Ascending aorta (tissue), 2 donors: ENCODE measurements at regions of chr4 and their contacts with region 1.

Region 1: DNA sequence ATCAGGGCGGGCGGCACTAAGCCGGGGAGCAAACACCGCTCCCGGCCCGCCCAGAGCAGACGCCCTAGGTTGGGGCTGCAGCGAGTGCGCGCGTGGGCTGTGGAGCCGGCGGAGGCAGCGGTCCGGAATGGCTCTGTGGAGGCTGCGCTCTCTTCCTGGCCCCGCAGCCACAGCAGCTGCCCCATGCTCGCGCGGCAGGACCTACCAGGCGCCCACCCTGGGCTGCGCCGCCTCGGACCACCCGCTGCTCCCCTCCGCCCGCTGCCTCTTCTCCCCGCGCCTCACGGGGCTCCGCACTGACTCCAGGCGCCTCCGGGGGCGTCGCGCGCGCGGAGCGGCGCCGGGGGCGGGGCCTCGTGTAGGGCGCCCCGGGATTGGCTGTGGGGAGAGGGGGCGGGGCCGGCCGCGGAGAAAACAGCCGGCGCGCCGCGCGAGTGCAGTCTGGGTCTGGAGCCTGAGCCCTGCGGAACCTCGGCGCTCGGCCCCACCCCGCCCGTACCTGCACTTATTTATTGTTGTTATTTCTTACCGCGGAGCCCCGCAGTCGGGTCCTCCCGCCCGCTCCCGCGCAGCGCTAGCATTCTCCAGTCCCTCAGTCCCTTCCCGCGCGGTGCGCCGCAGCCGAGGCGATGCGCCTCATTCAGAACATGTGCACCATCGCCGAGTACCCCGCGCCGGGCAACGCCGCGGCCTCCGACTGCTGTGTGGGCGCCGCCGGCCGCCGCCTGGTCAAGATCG is at the start of gene RASL11B:
- DNase-seq: peak; percentile 20 to 90
- H3K4me3 ChIP-seq: peak within 1 kb of the TSS; percentile 72 to 80
- H3K27ac ChIP-seq: peak within 1 kb of the TSS; percentile 68 to 79
- H3K4me1 ChIP-seq: peaks cover 0 to 17% of the 10 kb centered on the region in 2 donors
- H3K27me3 ChIP-seq: no peaks in the 10 kb centered on the region
- CTCF ChIP-seq: peak in 2 of 3 experiments; percentile 24 to 43
- total RNA-seq, gene RASL11B: not detected

Region 2: DNA sequence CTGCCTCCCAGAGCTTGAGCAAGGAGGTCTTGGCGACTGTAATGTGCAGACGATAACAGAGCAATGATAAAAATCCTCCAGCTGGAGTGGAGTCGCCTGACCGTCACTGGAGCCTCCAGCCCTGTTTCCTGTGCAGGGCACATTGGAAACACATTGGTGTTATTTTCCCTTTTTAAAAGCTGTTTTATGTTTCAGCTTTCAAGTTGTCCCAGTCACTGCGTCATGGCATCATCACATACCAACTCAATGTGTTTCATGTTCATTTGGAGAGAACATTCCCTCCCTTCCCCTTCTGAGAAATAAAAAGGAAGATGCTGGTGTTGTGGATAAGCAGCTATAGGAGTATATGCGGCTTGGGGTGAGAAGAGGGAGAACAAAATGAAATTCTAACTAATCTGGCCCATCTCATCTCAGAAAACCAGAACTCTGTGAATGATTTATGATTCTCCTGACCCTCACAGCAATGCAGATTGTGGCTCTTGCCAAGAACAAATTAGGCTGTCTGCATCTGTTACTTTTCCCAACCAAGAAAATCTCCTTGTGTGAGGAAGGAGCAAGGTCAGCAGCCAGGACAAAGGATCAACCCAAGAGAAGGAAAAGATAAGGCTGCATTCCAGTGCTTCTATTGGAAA is 134.3 kb after region 1 on chr4:
- intact Hi-C with region 1: loop called (anchors 1 kb)
- DNase-seq: peak in 1 of 2 donors; percentile 76
- H3K4me3 ChIP-seq: peak overlapping the region in 1 of 2 donors; percentile 1
- H3K27ac ChIP-seq: peak overlapping the region; percentile 75 to 79
- H3K4me1 ChIP-seq: peaks cover 18 to 27% of the 10 kb centered on the region in 2 donors
- H3K27me3 ChIP-seq: no peaks in the 10 kb centered on the region
- CTCF ChIP-seq: no peak